ENCODE measurements at regions of chr5 and their contacts with region 1.

Region 1: GRCh38 chr5:79133657-79134451 is 22.2 kb downstream of the BHMT start:
- DNase-seq: peak; percentile 90
- H3K4me3 ChIP-seq: peak overlapping the region; percentile 66
- H3K27ac ChIP-seq: peak overlapping the region; percentile 63
- H3K4me1 ChIP-seq: peaks cover 9% of the 10 kb centered on the region
- H3K27me3 ChIP-seq: no peaks in the 10 kb centered on the region

Region 2: DNA sequence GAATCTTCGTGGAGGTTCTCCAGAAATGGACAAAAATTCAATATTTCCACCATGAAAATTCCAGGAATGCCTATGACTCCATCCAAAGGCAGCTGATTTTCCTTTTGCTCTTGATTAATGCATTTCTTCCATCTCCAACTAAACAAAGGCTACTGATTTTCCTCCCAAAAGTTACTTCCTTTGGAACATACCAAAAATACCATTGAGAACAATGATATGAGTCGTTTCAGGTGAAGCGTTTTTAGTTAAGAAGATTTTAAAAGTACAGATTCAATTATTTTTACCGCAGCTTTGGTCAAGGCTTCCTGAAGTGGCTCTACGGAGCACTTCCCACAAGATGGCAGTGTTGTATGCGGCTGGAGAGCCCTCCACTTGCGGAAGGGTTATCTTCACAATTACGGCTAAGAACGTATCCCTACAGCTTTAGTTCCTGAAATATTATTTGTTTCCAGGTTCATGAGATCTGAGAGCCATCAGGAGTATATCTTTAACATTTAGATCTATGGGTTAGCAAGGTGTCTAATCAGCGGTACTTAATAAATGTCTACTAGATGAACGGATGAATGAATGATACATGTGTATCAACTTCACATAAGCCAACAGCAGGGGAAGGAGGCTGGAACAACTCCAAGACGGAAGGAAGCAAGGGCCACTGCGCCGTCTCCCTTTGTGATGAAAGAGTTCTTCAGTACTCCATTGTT is 112.8 kb before region 1 on chr5:
- in situ Hi-C with region 1: loop called (anchors 10 kb)
- DNase-seq: peak; percentile 81
- H3K4me3 ChIP-seq: peak overlapping the region; percentile 65
- H3K27ac ChIP-seq: peak overlapping the region; percentile 35
- H3K4me1 ChIP-seq: peaks cover 18% of the 10 kb centered on the region; the same call in 1 of the 2 replicates
- H3K27me3 ChIP-seq: no peaks in the 10 kb centered on the region